ENCODE measurements at regions of chr19 and their contacts with region 1.

Region 1: DNA sequence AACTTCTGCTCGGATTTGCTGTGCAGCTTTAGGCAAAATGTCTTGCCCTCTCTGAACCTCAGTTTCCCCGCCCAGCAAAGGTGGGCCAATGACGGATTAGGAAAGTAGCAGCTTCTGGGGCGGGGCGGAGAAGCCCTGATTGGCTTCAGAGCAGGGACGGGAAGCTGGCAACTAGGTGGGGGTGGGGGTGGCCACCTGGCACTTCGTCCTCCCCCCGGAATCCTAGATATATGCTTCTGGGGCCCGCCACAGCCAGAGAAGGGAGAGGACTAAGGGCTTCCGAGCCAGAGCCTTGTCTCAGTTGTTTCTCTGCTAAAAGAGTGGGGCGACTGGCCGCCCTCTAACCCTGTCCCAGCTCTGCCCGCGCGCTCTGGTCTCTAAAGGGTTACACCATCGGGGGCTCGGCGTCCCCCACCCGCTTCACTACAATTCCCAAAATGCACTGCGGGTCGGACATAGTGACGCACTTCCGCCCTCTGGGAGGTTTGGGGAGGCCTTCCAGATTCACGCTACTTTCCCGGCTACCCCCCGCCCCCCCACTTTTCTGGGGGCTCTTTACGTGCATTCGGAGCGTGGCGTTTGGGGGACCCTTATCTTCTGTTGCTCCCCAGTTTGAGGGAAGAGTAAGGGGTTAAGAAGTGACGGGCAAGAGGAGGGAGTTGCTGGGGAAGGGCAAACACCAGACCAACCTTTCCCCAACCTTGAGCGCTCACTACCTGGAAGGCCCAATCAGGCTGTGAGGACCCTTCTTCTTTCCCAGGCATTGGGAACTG is 672 bp upstream of the IRF2BP1 start:
- DNase-seq: peak; percentile 96
- H3K4me3 Mint-ChIP-seq: peak overlapping the region; percentile 89
- H3K27ac Mint-ChIP-seq: peak overlapping the region; percentile 93
- H3K4me1 Mint-ChIP-seq: peaks cover 18% of the 10 kb centered on the region
- H3K27me3 Mint-ChIP-seq: no peaks in the 10 kb centered on the region

Region 2: GRCh38 chr19:45692187-45693105 is 194.2 kb before region 1 on chr19 and contains the start of gene QPCTL:
- intact Hi-C with region 1: loop called (anchors 1 kb)
- DNase-seq: peak; percentile 99
- H3K4me3 Mint-ChIP-seq: peak within 1 kb of the TSS; percentile 94
- H3K27ac Mint-ChIP-seq: peak within 1 kb of the TSS; percentile 97
- H3K4me1 Mint-ChIP-seq: peaks cover 19% of the 10 kb centered on the region
- H3K27me3 Mint-ChIP-seq: no peaks in the 10 kb centered on the region
- total RNA-seq, gene QPCTL: 16.7 and 20.9 TPM in 2 replicates

Region 3: DNA sequence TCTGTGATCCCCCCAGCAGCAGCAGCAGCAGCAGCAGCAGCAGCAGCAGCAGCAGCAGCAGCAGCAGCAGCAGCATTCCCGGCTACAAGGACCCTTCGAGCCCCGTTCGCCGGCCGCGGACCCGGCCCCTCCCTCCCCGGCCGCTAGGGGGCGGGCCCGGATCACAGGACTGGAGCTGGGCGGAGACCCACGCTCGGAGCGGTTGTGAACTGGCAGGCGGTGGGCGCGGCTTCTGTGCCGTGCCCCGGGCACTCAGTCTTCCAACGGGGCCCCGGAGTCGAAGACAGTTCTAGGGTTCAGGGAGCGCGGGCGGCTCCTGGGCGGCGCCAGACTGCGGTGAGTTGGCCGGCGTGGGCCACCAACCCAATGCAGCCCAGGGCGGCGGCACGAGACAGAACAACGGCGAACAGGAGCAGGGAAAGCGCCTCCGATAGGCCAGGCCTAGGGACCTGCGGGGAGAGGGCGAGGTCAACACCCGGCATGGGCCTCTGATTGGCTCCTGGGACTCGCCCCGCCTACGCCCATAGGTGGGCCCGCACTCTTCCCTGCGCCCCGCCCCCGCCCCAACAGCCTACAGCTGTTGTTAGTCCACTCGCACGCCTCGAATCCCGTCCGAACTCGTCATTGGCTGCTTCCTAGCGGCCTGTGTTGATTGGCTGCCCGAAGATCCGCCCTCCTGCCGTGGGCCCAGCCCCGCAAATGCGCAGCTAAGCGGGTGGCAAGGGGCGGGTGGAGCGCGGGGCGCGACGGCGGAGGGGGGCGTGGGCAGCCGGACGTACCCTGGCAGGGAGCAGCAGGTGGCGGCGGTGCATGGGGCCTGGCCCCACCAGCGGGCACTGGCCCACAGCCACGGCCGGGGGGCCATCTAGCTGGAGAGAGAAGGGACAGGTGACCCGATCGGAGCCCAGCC is 116.2 kb before region 1 on chr19:
- intact Hi-C with region 1: loop called (anchors 1 kb)
- DNase-seq: peak; percentile 97
- H3K4me3 Mint-ChIP-seq: peak overlapping the region; percentile 93
- H3K27ac Mint-ChIP-seq: peak overlapping the region; percentile 56
- H3K4me1 Mint-ChIP-seq: peaks cover 12% of the 10 kb centered on the region
- H3K27me3 Mint-ChIP-seq: peaks cover 20% of the 10 kb centered on the region

Region 4: GRCh38 chr19:45862564-45863334 is 23.9 kb before region 1 on chr19 and contains the start of gene SYMPK:
- intact Hi-C with region 1: loop called (anchors 1 kb)
- DNase-seq: peak; percentile 100
- H3K4me3 Mint-ChIP-seq: peak within 1 kb of the TSS; percentile 90
- H3K27ac Mint-ChIP-seq: peak within 1 kb of the TSS; percentile 97
- H3K4me1 Mint-ChIP-seq: peaks cover 24% of the 10 kb centered on the region
- H3K27me3 Mint-ChIP-seq: peaks cover 36% of the 10 kb centered on the region
- total RNA-seq, gene SYMPK: 124 and 131 TPM in 2 replicates

Region 5: GRCh38 chr19:45927565-45928261 is 41.1 kb after region 1 on chr19:
- intact Hi-C with region 1: loop called (anchors 1 kb)
- DNase-seq: peak; percentile 97
- H3K4me3 Mint-ChIP-seq: peak overlapping the region; percentile 74
- H3K27ac Mint-ChIP-seq: peak overlapping the region; percentile 8
- H3K4me1 Mint-ChIP-seq: peaks cover 14% of the 10 kb centered on the region
- H3K27me3 Mint-ChIP-seq: peaks cover 12% of the 10 kb centered on the region

Region 6: GRCh38 chr19:46049597-46049996 is 163.0 kb after region 1 on chr19:
- intact Hi-C with region 1: no loop called
- DNase-seq: no peak
- H3K4me3 Mint-ChIP-seq: no peak overlapping the region
- H3K27ac Mint-ChIP-seq: no peak overlapping the region
- H3K4me1 Mint-ChIP-seq: no peaks in the 10 kb centered on the region
- H3K27me3 Mint-ChIP-seq: peaks cover 60% of the 10 kb centered on the region

Region 7: GRCh38 chr19:46346821-46347571 is 460.4 kb after region 1 on chr19 and contains the start of gene PPP5C:
- intact Hi-C with region 1: loop called (anchors 10 kb)
- DNase-seq: peak; percentile 96
- H3K4me3 Mint-ChIP-seq: peak within 1 kb of the TSS; percentile 93
- H3K27ac Mint-ChIP-seq: peak within 1 kb of the TSS; percentile 93
- H3K4me1 Mint-ChIP-seq: peaks cover 50% of the 10 kb centered on the region
- H3K27me3 Mint-ChIP-seq: peaks cover 19% of the 10 kb centered on the region
- total RNA-seq, gene PPP5C: 160 and 169 TPM in 2 replicates